Cardiac septum (tissue), 1 donor: ENCODE measurements at regions of chr16 and their contacts with region 1.

Region 1: DNA sequence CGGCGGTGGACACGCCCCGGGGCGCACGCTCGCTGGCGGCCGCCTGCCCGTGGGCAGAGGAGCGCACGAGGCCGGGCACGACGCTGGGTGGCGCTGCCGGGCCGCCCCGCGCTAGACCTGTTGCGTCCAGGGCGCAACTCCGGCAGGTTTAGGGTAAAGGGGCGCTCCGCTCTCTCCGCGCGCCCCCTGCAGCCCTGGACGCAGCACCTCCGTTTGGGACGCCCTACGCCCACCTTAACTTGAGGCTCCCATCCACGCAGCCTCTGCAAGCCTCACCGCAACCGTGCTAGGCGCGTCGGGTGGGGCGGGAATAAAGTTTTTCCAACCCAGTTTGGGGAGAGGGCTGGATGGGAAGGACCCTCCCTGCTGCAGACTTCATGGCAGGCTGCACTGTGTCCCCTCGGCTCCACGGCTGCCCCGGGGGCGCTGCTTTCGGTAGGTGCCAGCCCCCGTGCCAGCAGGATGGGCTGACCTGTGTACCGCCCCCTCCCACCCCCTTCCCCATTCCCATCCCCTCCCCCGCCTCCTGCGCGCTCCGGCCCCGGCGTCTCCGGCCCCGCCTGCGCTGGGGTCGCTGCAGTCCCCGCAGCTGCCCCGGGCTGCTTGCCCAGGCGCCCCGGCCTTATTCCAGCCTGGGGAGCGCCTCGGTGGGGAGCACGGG is at the start of gene SYT17:
- DNase-seq: no peak
- total RNA-seq, gene SYT17: 0.81 TPM

Region 2: DNA sequence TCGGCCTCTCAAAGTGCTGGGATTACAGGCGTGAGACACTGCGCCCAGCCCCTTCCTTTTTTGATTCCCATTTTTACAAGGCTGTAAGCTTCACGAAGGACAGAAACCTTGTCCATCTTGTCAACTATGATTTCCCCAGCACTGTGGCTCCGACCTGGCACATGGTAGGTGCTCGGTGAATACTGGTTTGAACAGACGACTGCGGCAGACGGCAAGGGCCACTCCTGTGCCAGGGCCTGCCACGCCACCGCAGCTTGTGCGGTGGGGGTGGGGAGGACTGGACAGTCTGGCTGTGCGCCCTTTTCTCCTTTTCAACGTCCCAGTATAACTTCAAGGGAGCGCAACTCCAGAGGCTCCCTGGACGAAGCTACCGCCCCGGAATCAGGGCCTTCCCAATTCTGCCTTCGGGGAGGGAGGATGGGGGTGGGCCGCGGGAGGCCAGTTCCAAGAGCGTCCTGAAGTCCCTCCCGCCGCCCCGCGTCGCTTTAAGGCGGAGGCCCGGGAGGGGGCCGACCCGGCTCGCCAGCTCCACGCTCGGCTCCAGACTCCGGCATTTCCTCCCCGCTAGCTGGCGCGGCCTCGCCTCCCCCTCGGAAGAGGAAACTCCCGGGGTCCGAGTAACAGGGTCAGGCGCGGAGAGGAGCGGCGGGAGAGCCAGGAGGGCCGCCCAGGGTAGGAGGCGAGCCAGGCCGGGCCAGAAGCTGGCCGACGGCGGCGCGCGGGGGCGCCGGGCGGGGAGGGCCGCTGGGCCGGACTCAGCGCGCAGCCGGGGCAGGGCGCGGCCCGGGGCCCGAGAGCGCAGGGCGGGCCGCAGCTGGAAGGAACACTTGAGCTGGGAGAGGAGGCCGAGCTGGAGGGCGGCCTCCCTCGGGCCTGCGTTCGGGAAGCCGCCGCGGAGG is 54.1 kb before region 1 on chr16 and contains the start of gene ITPRIPL2:
- intact Hi-C with region 1: loop called (anchors 5 kb)
- DNase-seq: peak; percentile 91
- total RNA-seq, gene ITPRIPL2: 24.6 TPM

Region 3: GRCh38 chr16:19236561-19237209 is 68.8 kb after region 1 on chr16:
- intact Hi-C with region 1: no loop called
- DNase-seq: no peak